ENCODE measurements at regions of chr22 and their contacts with region 1.

Region 1: GRCh38 chr22:43088979-43089717 is at the start of gene TTLL1:
- DNase-seq: peak; percentile 88
- H3K4me3 Mint-ChIP-seq: peak within 1 kb of the TSS; percentile 97
- H3K27ac Mint-ChIP-seq: peak within 1 kb of the TSS; percentile 97
- H3K4me1 Mint-ChIP-seq: peaks cover 18% of the 10 kb centered on the region
- H3K27me3 Mint-ChIP-seq: no peaks in the 10 kb centered on the region
- total RNA-seq, gene TTLL1: 2.0 TPM in 2 replicates

Region 2: GRCh38 chr22:42614312-42615091 is 474.6 kb before region 1 on chr22 and contains the start of gene POLDIP3:
- intact Hi-C with region 1: loop called (anchors 2 kb)
- DNase-seq: peak; percentile 98
- H3K4me3 Mint-ChIP-seq: peak within 1 kb of the TSS; percentile 92
- H3K27ac Mint-ChIP-seq: peak within 1 kb of the TSS; percentile 98
- H3K4me1 Mint-ChIP-seq: peaks cover 33% of the 10 kb centered on the region
- H3K27me3 Mint-ChIP-seq: no peaks in the 10 kb centered on the region
- total RNA-seq, gene POLDIP3: 77.9 and 87.2 TPM in 2 replicates

Region 3: GRCh38 chr22:42780070-42780540 is 309.0 kb before region 1 on chr22:
- intact Hi-C with region 1: loop called (anchors 1 kb)
- DNase-seq: peak; percentile 23
- H3K4me3 Mint-ChIP-seq: no peak overlapping the region
- H3K27ac Mint-ChIP-seq: no peak overlapping the region
- H3K4me1 Mint-ChIP-seq: no peaks in the 10 kb centered on the region
- H3K27me3 Mint-ChIP-seq: no peaks in the 10 kb centered on the region

Region 4: GRCh38 chr22:43014869-43015676 is 74.1 kb before region 1 on chr22 and contains the start of gene PACSIN2:
- intact Hi-C with region 1: loop called (anchors 1 kb)
- DNase-seq: peak; percentile 99
- H3K4me3 Mint-ChIP-seq: peak within 1 kb of the TSS; percentile 92
- H3K27ac Mint-ChIP-seq: peak within 1 kb of the TSS; percentile 79
- H3K4me1 Mint-ChIP-seq: peaks cover 22% of the 10 kb centered on the region
- H3K27me3 Mint-ChIP-seq: peaks cover 9% of the 10 kb centered on the region
- total RNA-seq, gene PACSIN2: 30.5 and 31.7 TPM in 2 replicates

Region 5: GRCh38 chr22:43126480-43127165 is 37.5 kb after region 1 on chr22:
- intact Hi-C with region 1: no loop called
- DNase-seq: no peak
- H3K4me3 Mint-ChIP-seq: no peak overlapping the region
- H3K27ac Mint-ChIP-seq: no peak overlapping the region
- H3K4me1 Mint-ChIP-seq: no peaks in the 10 kb centered on the region
- H3K27me3 Mint-ChIP-seq: no peaks in the 10 kb centered on the region

Region 6: DNA sequence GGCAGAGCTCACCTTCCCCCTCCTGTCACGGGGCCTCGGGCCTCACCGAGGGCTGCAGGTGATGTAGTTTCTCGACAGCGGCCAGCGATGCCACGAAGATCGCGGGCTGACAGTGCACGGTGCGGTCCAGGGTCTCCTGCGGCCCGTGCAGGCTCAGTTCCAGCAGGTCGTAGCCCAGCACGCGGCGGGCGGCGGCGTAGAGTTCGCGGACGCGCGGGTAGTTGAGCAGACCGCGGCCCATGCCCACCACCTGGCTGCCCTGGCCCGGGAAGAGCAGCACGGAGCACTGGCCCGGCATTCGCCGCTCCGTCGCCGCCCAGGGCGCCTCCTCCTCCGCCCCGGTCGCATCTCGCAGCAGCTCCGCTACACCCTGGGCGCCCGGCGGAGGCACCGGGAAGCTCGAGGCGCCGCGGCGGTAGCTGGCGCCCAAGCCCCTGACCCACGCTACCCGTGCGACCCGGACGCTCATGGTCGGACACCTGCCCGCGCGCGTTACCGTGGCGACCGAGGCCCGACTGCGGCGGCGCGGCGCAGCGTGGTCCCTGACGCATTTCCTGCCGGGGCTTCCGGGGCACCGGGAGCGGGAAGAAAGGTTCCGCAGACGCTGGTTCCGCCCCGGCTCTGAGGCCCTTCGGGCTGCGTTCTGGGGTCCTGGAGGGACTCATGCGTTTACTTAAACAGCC is 53.9 kb after region 1 on chr22 and contains the start of gene MCAT:
- intact Hi-C with region 1: loop called (anchors 2 kb)
- DNase-seq: peak; percentile 87
- H3K4me3 Mint-ChIP-seq: peak within 1 kb of the TSS; percentile 89
- H3K27ac Mint-ChIP-seq: peak within 1 kb of the TSS; percentile 92
- H3K4me1 Mint-ChIP-seq: peaks cover 33% of the 10 kb centered on the region
- H3K27me3 Mint-ChIP-seq: no peaks in the 10 kb centered on the region
- total RNA-seq, gene MCAT: 20.3 and 23.4 TPM in 2 replicates

Region 7: DNA sequence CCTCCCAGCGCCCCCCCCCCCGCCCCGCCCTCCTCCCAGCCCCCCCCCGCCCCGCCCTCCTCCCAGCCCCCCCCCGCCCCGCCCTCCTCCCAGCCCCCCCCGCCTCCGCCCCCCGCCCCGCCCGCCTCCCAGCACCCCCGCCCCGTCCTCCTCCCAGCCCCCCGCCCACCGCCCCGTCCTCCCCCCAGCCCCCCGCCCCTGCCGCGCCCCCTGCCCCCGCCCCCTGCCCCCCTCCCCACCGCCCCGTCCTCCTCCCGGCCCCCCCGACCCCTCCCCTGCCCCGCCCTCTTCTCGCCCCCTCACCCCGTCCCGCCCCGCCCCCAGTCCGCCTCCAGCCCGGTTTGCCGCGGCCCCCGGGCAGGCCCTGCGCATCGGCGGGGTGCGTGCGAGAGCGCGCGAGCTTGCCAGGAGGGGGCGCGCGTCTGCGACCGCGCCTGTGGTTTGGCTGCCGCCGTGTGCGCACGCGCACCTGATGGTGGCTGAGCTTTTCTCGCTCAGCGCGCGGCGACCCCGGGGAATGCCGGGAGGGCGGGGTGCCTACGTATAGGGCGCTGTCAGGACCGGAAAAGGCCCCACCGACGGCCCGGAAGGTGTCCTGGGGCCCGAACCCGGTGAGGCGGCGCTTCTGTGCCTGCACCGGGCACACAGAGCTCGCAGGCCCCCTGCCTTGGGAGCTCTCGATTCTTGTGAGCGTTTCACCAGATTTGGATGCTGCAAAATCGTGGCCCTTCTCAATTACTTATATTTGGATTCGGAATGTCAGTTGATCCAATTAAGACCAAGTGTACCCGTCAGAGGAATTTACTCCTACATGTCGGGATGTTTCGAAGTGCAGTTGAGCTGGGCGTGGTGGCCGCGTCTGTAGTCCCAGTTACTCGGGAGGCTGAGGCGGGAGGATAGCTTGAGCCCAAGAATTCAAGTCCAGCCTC is 98.3 kb after region 1 on chr22:
- intact Hi-C with region 1: loop called (anchors 1 kb)
- DNase-seq: peak; percentile 98
- H3K4me3 Mint-ChIP-seq: peak overlapping the region; percentile 81
- H3K27ac Mint-ChIP-seq: peak overlapping the region; percentile 92
- H3K4me1 Mint-ChIP-seq: peaks cover 16% of the 10 kb centered on the region
- H3K27me3 Mint-ChIP-seq: peaks cover 6% of the 10 kb centered on the region

Measured in activated T-helper 1 cell treated with anti-CD3 and anti-CD28 coated beads, Interleukin-12 subunit alpha, Interleukin-12 subunit beta, Interleukin-2, Interleukin-4 antibody, amounts not matched to agents 30 ng/mL and 10 ng/mL and 1 ng/mL, durations not matched to agents 14 hours and 24 hours and 36 hours (primary cell).